Thyroid gland (tissue), 4 donors: ENCODE measurements at regions of chr4 and their contacts with region 1.

Region 1: GRCh38 chr4:37693450-37694190 is 7.4 kb upstream of the RELL1 start:
- DNase-seq: no peak
- H3K4me3 ChIP-seq: no peak overlapping the region
- H3K27ac ChIP-seq: no peak overlapping the region
- H3K4me1 ChIP-seq: no peaks in the 10 kb centered on the region
- H3K27me3 ChIP-seq: no peaks in the 10 kb centered on the region
- CTCF ChIP-seq: no peak
- POLR2A ChIP-seq: no peak

Region 2: GRCh38 chr4:37780444-37781150 is 87.0 kb after region 1 on chr4:
- intact Hi-C with region 1: loop called (anchors 10 kb)
- DNase-seq: no peak
- H3K4me3 ChIP-seq: no peak overlapping the region
- H3K27ac ChIP-seq: no peak overlapping the region
- H3K4me1 ChIP-seq: no peaks in the 10 kb centered on the region
- H3K27me3 ChIP-seq: no peaks in the 10 kb centered on the region
- CTCF ChIP-seq: no peak
- POLR2A ChIP-seq: no peak

Region 3: GRCh38 chr4:37946503-37947179 is 253.0 kb after region 1 on chr4:
- intact Hi-C with region 1: no loop called
- DNase-seq: no peak
- H3K4me3 ChIP-seq: no peak overlapping the region
- H3K27ac ChIP-seq: no peak overlapping the region
- H3K4me1 ChIP-seq: no peaks in the 10 kb centered on the region
- H3K27me3 ChIP-seq: no peaks in the 10 kb centered on the region
- CTCF ChIP-seq: no peak
- POLR2A ChIP-seq: no peak